ENCODE measurements at regions of chr13 and their contacts with region 1.

Region 1: GRCh38 chr13:20924758-20925394 is 22.3 kb upstream of the XPO4 start:
- DNase-seq: peak; percentile 75
- H3K4me3 Mint-ChIP-seq: no peak overlapping the region
- H3K27ac Mint-ChIP-seq: no peak overlapping the region
- H3K4me1 Mint-ChIP-seq: no peaks in the 10 kb centered on the region
- H3K27me3 Mint-ChIP-seq: peaks cover 1% of the 10 kb centered on the region

Region 2: DNA sequence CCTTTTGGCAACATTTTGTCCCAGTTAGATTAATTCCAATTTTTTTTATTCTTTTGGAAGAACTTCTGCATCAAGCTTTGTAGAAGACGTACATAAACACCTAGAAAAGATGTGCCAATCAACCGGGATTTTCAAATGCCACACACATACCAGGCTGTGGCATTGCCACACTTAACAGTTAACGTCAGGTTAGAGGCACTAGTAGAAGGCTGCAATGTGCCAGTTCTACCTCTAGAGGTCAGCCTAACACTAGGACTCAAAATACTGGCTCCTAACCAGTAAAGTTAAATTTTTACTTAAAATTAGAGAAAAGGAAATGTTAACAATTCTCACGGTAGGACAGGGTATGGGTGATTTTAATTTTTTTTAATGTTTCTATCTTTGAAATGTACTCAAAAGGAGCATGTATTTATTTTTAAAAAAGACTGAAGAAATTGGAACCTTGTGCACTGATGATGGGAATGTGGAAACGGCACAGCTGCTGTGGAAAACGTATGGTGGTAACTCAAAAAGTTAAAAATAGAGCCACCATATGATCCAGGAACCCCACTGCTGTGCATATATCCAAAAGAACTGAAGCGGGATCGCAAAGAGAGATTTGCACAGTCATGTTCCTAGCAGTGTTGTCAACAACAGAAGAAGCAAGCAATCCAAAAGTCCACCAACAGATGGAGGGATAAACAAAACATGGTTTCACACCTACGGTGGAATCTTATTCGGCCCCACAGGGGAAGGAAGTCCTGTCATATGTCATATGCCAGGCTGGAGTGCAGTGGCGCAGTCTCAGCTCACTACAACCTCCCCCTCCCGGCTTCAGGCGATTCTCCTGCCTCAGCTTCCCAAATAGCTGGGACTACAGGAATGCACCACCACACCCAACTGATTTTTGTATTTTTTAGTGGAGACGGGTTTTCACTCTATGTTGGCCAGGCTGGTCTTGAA is 429.5 kb before region 1 on chr13:
- CTCF ChIA-PET with region 1: interaction called, 21 read pairs
- POLR2A ChIA-PET with region 1: no interaction called
- DNase-seq: peak; percentile 70
- H3K4me3 Mint-ChIP-seq: no peak overlapping the region
- H3K27ac Mint-ChIP-seq: no peak overlapping the region
- H3K4me1 Mint-ChIP-seq: peaks cover 7% of the 10 kb centered on the region
- H3K27me3 Mint-ChIP-seq: no peaks in the 10 kb centered on the region